CD4-positive, alpha-beta memory T cell (primary cell): ENCODE measurements at regions of chr7 and their contacts with region 1.

Region 1: GRCh38 chr7:22726345-22727185 is 435 bp upstream of the IL6 start:
- DNase-seq: peak; percentile 50 to 59 (median 54)
- H3K4me3 ChIP-seq: no peak overlapping the region
- H3K4me3 Mint-ChIP-seq: peak overlapping the region; percentile 26 to 76 (median 66)
- H3K27ac ChIP-seq: no peak overlapping the region
- H3K27ac Mint-ChIP-seq: peak overlapping the region in 3 of 7 donors; percentile 5 to 88 (median 37)
- H3K4me1 ChIP-seq: peaks cover 17% of the 10 kb centered on the region
- H3K4me1 Mint-ChIP-seq: peaks cover 8 to 15% (median 11%) of the 10 kb centered on the region in 4 donors
- H3K27me3 ChIP-seq: no peaks in the 10 kb centered on the region
- H3K27me3 Mint-ChIP-seq: peaks cover 3 to 13% of the 10 kb centered on the region in 2 donors

Region 2: GRCh38 chr7:22016507-22016906 is 710.1 kb before region 1 on chr7:
- CTCF ChIA-PET with region 1: no interaction called
- POLR2A ChIA-PET with region 1: no interaction called
- intact Hi-C with region 1: no loop called
- DNase-seq: no peak
- H3K4me3 ChIP-seq: no peak overlapping the region
- H3K4me3 Mint-ChIP-seq: no peak overlapping the region
- H3K27ac ChIP-seq: no peak overlapping the region
- H3K27ac Mint-ChIP-seq: no peak overlapping the region
- H3K4me1 ChIP-seq: no peaks in the 10 kb centered on the region
- H3K4me1 Mint-ChIP-seq: no peaks in the 10 kb centered on the region
- H3K27me3 ChIP-seq: no peaks in the 10 kb centered on the region
- H3K27me3 Mint-ChIP-seq: peaks cover 4 to 19% of the 10 kb centered on the region in 2 donors

Region 3: GRCh38 chr7:22551768-22552513 is 174.6 kb before region 1 on chr7:
- CTCF ChIA-PET with region 1: interaction called, 233 read pairs
- POLR2A ChIA-PET with region 1: no interaction called
- intact Hi-C with region 1: no loop called
- DNase-seq: no peak
- H3K4me3 ChIP-seq: no peak overlapping the region
- H3K4me3 Mint-ChIP-seq: no peak overlapping the region
- H3K27ac ChIP-seq: no peak overlapping the region
- H3K27ac Mint-ChIP-seq: no peak overlapping the region
- H3K4me1 ChIP-seq: peaks cover 11% of the 10 kb centered on the region
- H3K4me1 Mint-ChIP-seq: peaks cover 7 to 9% (median 9%) of the 10 kb centered on the region in 4 donors
- H3K27me3 ChIP-seq: peaks cover 11% of the 10 kb centered on the region
- H3K27me3 Mint-ChIP-seq: peaks cover 32 to 39% of the 10 kb centered on the region in 2 donors

Region 4: GRCh38 chr7:22657479-22657878 is 69.1 kb before region 1 on chr7:
- CTCF ChIA-PET with region 1: interaction called, 30 read pairs
- POLR2A ChIA-PET with region 1: no interaction called
- intact Hi-C with region 1: loop called (anchors 1 kb)
- DNase-seq: peak in 2 of 5 donors; percentile 9 to 10
- H3K4me3 ChIP-seq: no peak overlapping the region
- H3K4me3 Mint-ChIP-seq: no peak overlapping the region
- H3K27ac ChIP-seq: no peak overlapping the region
- H3K27ac Mint-ChIP-seq: no peak overlapping the region
- H3K4me1 ChIP-seq: no peaks in the 10 kb centered on the region
- H3K4me1 Mint-ChIP-seq: peaks cover 0 to 7% (median 0%) of the 10 kb centered on the region in 4 donors
- H3K27me3 ChIP-seq: no peaks in the 10 kb centered on the region
- H3K27me3 Mint-ChIP-seq: peaks cover 0 to 1% of the 10 kb centered on the region in 2 donors

Region 5: DNA sequence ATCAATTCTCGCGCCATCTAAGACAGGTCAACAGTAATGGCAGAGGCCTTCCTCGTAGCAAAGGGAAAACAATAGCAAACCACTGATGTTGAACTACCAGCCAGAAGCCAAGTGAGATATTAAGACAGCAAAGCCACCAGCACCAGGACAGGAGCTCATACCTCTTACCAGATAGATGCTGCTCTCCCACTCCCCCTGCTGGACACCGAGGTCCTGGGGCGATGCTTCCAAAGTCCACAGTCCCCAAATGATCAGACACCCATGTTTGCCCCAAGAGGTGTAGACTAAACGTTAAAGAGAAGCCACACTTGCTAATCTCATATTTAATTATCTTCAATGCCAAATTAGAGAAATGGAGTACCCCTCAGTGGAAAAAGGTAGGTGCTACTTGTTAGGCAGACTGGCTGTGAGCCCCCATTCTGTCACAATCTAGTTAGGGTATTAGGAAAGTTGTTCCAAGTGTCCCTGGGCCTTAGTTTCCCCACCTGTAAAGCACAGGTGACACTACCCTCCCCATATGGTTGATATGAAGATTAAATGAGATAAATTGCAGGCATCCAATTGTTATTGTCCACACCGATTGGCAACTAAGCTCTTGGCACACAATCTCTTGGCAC is 56.2 kb after region 1 on chr7:
- CTCF ChIA-PET with region 1: interaction called, 6 read pairs
- POLR2A ChIA-PET with region 1: interaction called, 3 read pairs
- intact Hi-C with region 1: loop called (anchors 1 kb)
- DNase-seq: peak; percentile 53 to 62 (median 58)
- H3K4me3 ChIP-seq: no peak overlapping the region
- H3K4me3 Mint-ChIP-seq: no peak overlapping the region
- H3K27ac ChIP-seq: no peak overlapping the region
- H3K27ac Mint-ChIP-seq: no peak overlapping the region
- H3K4me1 ChIP-seq: no peaks in the 10 kb centered on the region
- H3K4me1 Mint-ChIP-seq: no peaks in the 10 kb centered on the region
- H3K27me3 ChIP-seq: no peaks in the 10 kb centered on the region
- H3K27me3 Mint-ChIP-seq: no peaks in the 10 kb centered on the region

Region 6: DNA sequence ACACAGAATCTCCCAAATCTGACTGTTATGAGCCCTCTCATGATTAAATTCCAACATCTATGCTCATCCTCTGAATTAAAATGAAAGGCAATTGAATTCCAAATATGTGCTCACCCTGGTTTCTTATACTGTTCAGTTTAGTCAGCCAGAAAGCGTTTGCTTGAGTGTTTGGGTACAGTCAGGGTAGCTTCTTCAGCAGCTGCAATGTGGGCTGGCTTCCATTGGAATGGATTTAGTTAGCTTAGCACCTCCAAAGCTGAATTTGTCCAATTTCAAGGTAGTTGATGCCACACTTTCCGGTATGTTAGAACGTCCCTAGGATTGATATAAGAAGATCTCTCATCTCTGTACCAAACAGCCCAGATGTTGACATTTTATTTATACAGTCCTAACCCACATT is 388.3 kb after region 1 on chr7:
- CTCF ChIA-PET with region 1: no interaction called
- POLR2A ChIA-PET with region 1: no interaction called
- intact Hi-C with region 1: no loop called
- DNase-seq: no peak
- H3K4me3 ChIP-seq: no peak overlapping the region
- H3K4me3 Mint-ChIP-seq: no peak overlapping the region
- H3K27ac ChIP-seq: no peak overlapping the region
- H3K27ac Mint-ChIP-seq: no peak overlapping the region
- H3K4me1 ChIP-seq: no peaks in the 10 kb centered on the region
- H3K4me1 Mint-ChIP-seq: peaks cover 26 to 44% (median 34%) of the 10 kb centered on the region in 4 donors
- H3K27me3 ChIP-seq: no peaks in the 10 kb centered on the region
- H3K27me3 Mint-ChIP-seq: no peaks in the 10 kb centered on the region